ENCODE measurements at regions of chr1 and their contacts with region 1.

Region 1: DNA sequence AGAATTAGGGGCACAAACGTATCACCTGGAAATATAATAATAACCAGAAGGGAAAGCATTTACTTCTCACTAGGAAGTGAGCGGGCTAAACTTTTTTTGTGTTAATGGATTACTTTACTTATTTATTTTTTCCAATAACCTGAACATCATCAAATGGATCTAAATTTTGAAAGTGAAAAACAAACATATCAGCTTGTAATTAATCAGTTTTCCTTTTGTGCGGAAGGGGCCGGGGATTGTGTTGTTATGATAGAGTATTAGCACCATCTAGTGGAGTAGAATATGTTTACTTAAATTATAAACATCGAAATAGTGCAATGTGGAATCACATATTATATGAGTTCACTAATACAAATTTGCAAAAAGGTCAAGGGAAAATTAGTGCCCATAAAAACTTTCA is 9.0 kb downstream of the CFH start:
- DNase-seq: peak; percentile 55
- H3K4me3 Mint-ChIP-seq: no peak overlapping the region
- H3K27ac Mint-ChIP-seq: peak overlapping the region; percentile 2
- H3K4me1 Mint-ChIP-seq: peaks cover 23% of the 10 kb centered on the region
- H3K27me3 Mint-ChIP-seq: no peaks in the 10 kb centered on the region
- CTCF ChIP-seq: peak; percentile 74

Region 2: GRCh38 chr1:195939844-195940243 is 721.0 kb before region 1 on chr1:
- CTCF ChIA-PET with region 1: interaction called, 4 read pairs
- POLR2A ChIA-PET with region 1: no interaction called
- intact Hi-C with region 1: loop called (anchors 10 kb)
- DNase-seq: peak; percentile 51
- H3K4me3 Mint-ChIP-seq: no peak overlapping the region
- H3K27ac Mint-ChIP-seq: no peak overlapping the region
- H3K4me1 Mint-ChIP-seq: no peaks in the 10 kb centered on the region
- H3K27me3 Mint-ChIP-seq: no peaks in the 10 kb centered on the region
- CTCF ChIP-seq: peak; percentile 39

Region 3: DNA sequence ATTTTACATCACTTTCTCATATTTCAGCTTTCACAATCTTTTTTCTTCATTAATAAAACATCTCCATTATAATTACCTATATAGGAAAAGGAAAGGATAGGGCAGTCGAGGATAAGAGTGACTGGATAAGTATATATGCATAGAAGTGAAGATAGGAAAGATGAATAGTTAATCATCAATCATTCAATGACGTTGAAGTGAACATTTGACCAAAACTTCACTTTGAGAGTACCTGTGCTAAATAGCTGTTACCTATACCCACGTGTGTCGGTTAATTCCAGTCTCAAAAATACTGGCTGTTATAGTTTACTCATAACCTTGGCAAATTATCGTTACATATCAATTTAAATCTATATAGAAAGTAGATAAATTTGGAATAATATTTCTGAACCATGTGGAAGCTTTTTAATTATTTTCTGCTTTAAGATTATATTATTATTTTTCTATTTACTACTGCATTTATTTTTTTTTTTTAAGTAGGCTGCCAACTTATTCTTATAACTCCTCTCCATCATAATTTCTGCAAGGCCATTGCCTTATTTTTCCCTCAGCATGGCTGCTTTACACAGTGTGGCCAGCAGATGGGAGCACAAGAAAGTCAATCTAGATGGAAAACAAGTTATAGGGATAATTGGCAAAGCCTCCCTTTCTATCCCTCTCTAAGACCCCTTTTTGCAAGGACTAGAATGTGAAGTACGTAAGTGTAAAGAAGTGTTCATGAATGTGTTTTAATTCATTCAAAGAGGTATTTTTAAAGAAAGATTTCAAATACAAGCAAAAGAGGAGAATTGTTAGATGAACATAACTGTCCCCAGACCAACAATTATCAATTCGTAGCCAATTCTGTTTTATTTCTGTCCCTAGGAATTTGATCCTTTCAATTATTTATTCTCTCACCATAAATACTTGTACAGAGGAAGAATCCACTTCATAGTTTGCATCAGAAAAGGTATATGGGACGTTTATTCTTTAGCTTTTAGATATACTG is 343.0 kb before region 1 on chr1:
- CTCF ChIA-PET with region 1: interaction called, 107 read pairs
- POLR2A ChIA-PET with region 1: interaction called, 5 read pairs
- intact Hi-C with region 1: loop called (anchors 1 kb)
- DNase-seq: peak; percentile 70
- H3K4me3 Mint-ChIP-seq: no peak overlapping the region
- H3K27ac Mint-ChIP-seq: no peak overlapping the region
- H3K4me1 Mint-ChIP-seq: peaks cover 6% of the 10 kb centered on the region
- H3K27me3 Mint-ChIP-seq: no peaks in the 10 kb centered on the region
- CTCF ChIP-seq: peak; percentile 88

Region 4: DNA sequence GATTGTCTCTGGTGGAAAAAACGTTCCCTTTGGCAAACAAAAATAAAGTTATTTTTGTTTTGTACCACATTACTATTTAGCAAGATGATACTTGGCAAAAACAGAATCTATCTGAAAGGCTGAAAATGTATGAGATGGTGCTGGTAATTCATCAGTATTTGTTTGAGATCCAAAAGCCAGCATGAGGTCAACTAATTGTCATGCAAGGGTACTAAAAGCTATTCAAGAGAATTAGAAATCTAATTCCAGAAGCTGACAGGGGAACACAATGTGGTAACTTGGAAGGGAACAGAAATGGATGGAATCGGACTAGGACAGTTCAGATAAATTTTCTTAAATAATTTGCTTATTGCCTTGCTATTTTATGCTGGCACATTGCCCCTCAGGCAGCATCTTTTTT is 316.4 kb before region 1 on chr1:
- CTCF ChIA-PET with region 1: interaction called, 47 read pairs
- POLR2A ChIA-PET with region 1: interaction called, 3 read pairs
- intact Hi-C with region 1: no loop called
- DNase-seq: no peak
- H3K4me3 Mint-ChIP-seq: no peak overlapping the region
- H3K27ac Mint-ChIP-seq: no peak overlapping the region
- H3K4me1 Mint-ChIP-seq: no peaks in the 10 kb centered on the region
- H3K27me3 Mint-ChIP-seq: no peaks in the 10 kb centered on the region
- CTCF ChIP-seq: no peak

Region 5: GRCh38 chr1:196355206-196355786 is 305.6 kb before region 1 on chr1:
- CTCF ChIA-PET with region 1: interaction called, 115 read pairs
- POLR2A ChIA-PET with region 1: interaction called, 15 read pairs
- intact Hi-C with region 1: loop called (anchors 1 kb)
- DNase-seq: peak; percentile 62
- H3K4me3 Mint-ChIP-seq: no peak overlapping the region
- H3K27ac Mint-ChIP-seq: no peak overlapping the region
- H3K4me1 Mint-ChIP-seq: no peaks in the 10 kb centered on the region
- H3K27me3 Mint-ChIP-seq: no peaks in the 10 kb centered on the region
- CTCF ChIP-seq: peak; percentile 79